ENCODE measurements at regions of chr5 and their contacts with region 1.

Region 1: GRCh38 chr5:138575194-138576015 is at the start of gene HSPA9:
- DNase-seq: peak; percentile 92
- ATAC-seq: peak; percentile 86
- H3K4me3 Mint-ChIP-seq: peak within 1 kb of the TSS; percentile 92
- H3K27ac Mint-ChIP-seq: peak within 1 kb of the TSS; percentile 100
- H3K4me1 Mint-ChIP-seq: peaks cover 26% of the 10 kb centered on the region
- H3K27me3 Mint-ChIP-seq: no peaks in the 10 kb centered on the region
- CTCF ChIP-seq: no peak
- total RNA-seq, gene HSPA9: 223 and 224 TPM in 2 replicates

Region 2: GRCh38 chr5:138213161-138214029 is 362.0 kb before region 1 on chr5 and contains the start of gene CDC23:
- CTCF ChIA-PET with region 1: no interaction called
- POLR2A ChIA-PET with region 1: interaction called, 4 read pairs
- intact Hi-C with region 1: loop called (anchors 1 kb)
- DNase-seq: peak; percentile 67
- ATAC-seq: peak; percentile 96
- H3K4me3 Mint-ChIP-seq: peak within 1 kb of the TSS; percentile 99
- H3K27ac Mint-ChIP-seq: peak within 1 kb of the TSS; percentile 93
- H3K4me1 Mint-ChIP-seq: peaks cover 27% of the 10 kb centered on the region
- H3K27me3 Mint-ChIP-seq: no peaks in the 10 kb centered on the region
- CTCF ChIP-seq: no peak
- total RNA-seq, gene CDC23: 31.9 and 35.0 TPM in 2 replicates

Region 3: GRCh38 chr5:138464008-138464387 is 111.4 kb before region 1 on chr5:
- CTCF ChIA-PET with region 1: no interaction called
- POLR2A ChIA-PET with region 1: interaction called, 12 read pairs
- intact Hi-C with region 1: loop called (anchors 1 kb)
- DNase-seq: peak; percentile 92
- ATAC-seq: peak; percentile 56
- H3K4me3 Mint-ChIP-seq: peak overlapping the region; percentile 89
- H3K27ac Mint-ChIP-seq: peak overlapping the region; percentile 92
- H3K4me1 Mint-ChIP-seq: peaks cover 49% of the 10 kb centered on the region
- H3K27me3 Mint-ChIP-seq: no peaks in the 10 kb centered on the region
- CTCF ChIP-seq: peak; percentile 87

Region 4: GRCh38 chr5:138588013-138588788 is 12.8 kb after region 1 on chr5:
- CTCF ChIA-PET with region 1: no interaction called
- POLR2A ChIA-PET with region 1: no interaction called
- intact Hi-C with region 1: no loop called
- DNase-seq: no peak
- ATAC-seq: no peak
- H3K4me3 Mint-ChIP-seq: no peak overlapping the region
- H3K27ac Mint-ChIP-seq: no peak overlapping the region
- H3K4me1 Mint-ChIP-seq: no peaks in the 10 kb centered on the region
- H3K27me3 Mint-ChIP-seq: peaks cover 11% of the 10 kb centered on the region
- CTCF ChIP-seq: no peak

Region 5: GRCh38 chr5:138601444-138601843 is 26.0 kb after region 1 on chr5:
- CTCF ChIA-PET with region 1: no interaction called
- POLR2A ChIA-PET with region 1: no interaction called
- intact Hi-C with region 1: no loop called
- DNase-seq: no peak
- ATAC-seq: no peak
- H3K4me3 Mint-ChIP-seq: no peak overlapping the region
- H3K27ac Mint-ChIP-seq: no peak overlapping the region
- H3K4me1 Mint-ChIP-seq: peaks cover 3% of the 10 kb centered on the region
- H3K27me3 Mint-ChIP-seq: peaks cover 23% of the 10 kb centered on the region
- CTCF ChIP-seq: no peak

Region 6: GRCh38 chr5:138752951-138753793 is 177.8 kb after region 1 on chr5 and contains the start of gene CTNNA1:
- CTCF ChIA-PET with region 1: no interaction called
- POLR2A ChIA-PET with region 1: interaction called, 8 read pairs
- intact Hi-C with region 1: loop called (anchors 2 kb)
- DNase-seq: peak; percentile 72
- ATAC-seq: peak; percentile 77
- H3K4me3 Mint-ChIP-seq: peak within 1 kb of the TSS; percentile 82
- H3K27ac Mint-ChIP-seq: peak within 1 kb of the TSS; percentile 53
- H3K4me1 Mint-ChIP-seq: peaks cover 26% of the 10 kb centered on the region
- H3K27me3 Mint-ChIP-seq: no peaks in the 10 kb centered on the region
- CTCF ChIP-seq: no peak
- total RNA-seq, gene CTNNA1: 76.0 and 77.7 TPM in 2 replicates

Region 7: DNA sequence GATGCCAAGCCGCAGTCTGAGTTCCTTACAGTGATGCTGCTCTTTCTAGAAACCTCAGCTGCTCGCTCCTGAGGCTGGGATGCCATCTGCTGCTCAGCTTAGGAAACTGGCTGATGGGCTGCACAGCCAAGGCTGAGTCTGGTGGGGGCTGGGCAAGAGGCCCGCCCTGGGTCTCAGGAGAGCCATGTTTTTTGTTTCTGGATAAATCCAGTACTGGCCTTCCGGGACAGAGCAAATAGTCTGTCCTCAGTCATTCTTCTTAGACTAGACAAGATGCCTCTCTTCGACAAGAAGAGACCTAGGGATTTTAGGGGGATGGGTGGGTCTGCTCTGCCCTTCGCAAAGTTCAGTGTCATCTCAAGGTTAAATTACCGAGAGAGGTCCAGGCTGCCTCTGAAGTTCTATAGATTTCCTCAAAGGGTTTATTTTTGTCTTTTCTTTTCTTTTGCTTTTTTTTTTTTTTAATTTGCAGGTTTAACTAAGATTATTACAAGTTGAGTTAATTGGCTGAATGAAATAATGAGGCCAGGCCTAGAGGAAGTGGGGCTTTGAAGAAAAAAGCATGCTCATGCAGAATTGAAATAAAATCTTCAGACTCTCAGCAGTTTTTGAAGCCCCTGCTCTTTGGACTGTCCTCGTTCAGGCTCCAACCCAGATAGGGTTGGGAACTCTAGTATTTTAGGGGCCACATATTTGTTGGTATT is 687.5 kb after region 1 on chr5:
- CTCF ChIA-PET with region 1: interaction called, 7 read pairs
- POLR2A ChIA-PET with region 1: interaction called, 4 read pairs
- intact Hi-C with region 1: loop called (anchors 1 kb)
- DNase-seq: no peak
- ATAC-seq: peak; percentile 99
- H3K4me3 Mint-ChIP-seq: no peak overlapping the region
- H3K27ac Mint-ChIP-seq: no peak overlapping the region
- H3K4me1 Mint-ChIP-seq: peaks cover 1% of the 10 kb centered on the region
- H3K27me3 Mint-ChIP-seq: peaks cover 10% of the 10 kb centered on the region
- CTCF ChIP-seq: no peak

Region 8: GRCh38 chr5:139341650-139342422 is 766.4 kb after region 1 on chr5 and contains the start of gene PAIP2:
- CTCF ChIA-PET with region 1: no interaction called
- POLR2A ChIA-PET with region 1: interaction called, 7 read pairs
- intact Hi-C with region 1: loop called (anchors 1 kb)
- DNase-seq: peak; percentile 95
- ATAC-seq: peak; percentile 87
- H3K4me3 Mint-ChIP-seq: peak within 1 kb of the TSS; percentile 96
- H3K27ac Mint-ChIP-seq: peak within 1 kb of the TSS; percentile 95
- H3K4me1 Mint-ChIP-seq: peaks cover 52% of the 10 kb centered on the region
- H3K27me3 Mint-ChIP-seq: no peaks in the 10 kb centered on the region
- CTCF ChIP-seq: no peak
- total RNA-seq, gene PAIP2: 79.7 and 80.8 TPM in 2 replicates

Region 9: DNA sequence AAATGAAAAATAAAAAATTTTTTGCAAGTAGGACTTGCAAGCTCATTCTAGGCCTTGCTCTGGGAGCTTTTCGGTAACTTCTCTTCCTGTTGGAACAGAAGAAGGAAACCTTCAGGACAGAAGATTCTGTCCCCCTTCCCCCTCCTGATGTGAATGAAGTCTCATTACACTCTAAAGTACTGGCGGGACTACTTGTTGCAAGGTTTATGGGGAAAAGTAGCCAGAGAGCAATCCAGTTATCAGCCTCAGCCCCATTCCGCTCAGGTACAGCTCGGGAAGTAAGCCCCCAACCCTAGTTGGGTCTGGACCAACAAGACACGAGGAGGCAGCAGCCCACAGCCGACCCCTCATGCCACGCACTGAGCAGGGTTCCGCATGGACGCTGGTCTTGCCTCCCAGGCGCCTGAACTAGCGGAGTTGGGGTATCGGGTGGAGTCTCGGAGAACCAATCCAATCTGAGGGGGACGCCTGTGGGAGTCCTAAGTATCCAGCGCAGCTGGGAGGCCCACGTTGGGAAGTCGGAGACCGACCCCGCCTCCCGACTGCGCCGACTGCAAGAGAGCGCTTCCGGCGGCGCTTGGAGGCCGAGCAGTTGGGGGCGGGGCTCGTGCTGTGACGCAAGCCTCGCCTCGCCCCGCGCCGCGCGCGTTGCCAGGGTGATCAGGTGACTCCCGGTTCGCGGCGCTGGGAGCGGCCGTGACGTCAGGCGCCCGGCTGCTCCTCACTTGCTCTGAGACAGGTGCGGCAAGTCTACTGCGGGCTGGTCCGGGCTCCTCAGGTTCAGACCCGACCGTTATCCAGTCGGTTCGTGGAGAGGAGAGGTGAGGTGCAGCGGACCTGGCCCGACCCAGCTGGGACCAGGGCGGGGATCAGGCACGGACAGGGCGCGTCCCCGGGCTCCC is 1599.3 kb after region 1 on chr5 and contains the start of gene CYSTM1:
- CTCF ChIA-PET with region 1: no interaction called
- POLR2A ChIA-PET with region 1: no interaction called
- intact Hi-C with region 1: loop called (anchors 10 kb)
- DNase-seq: peak; percentile 96
- ATAC-seq: peak; percentile 83
- H3K4me3 Mint-ChIP-seq: peak within 1 kb of the TSS; percentile 93
- H3K27ac Mint-ChIP-seq: peak within 1 kb of the TSS; percentile 89
- H3K4me1 Mint-ChIP-seq: peaks cover 15% of the 10 kb centered on the region
- H3K27me3 Mint-ChIP-seq: no peaks in the 10 kb centered on the region
- CTCF ChIP-seq: no peak
- total RNA-seq, gene CYSTM1: 20.1 and 23.3 TPM in 2 replicates